Posterior cingulate gyrus (tissue), 11 donors: ENCODE measurements at regions of chr1 and their contacts with region 1.

Region 1: GRCh38 chr1:228165372-228166169 is at the start of gene IBA57:
- DNase-seq: peak; percentile 98 to 100 (median 100)

Region 2: GRCh38 chr1:227924833-227925574 is 240.6 kb before region 1 on chr1:
- intact Hi-C with region 1: no loop called
- DNase-seq: peak in 4 of 10 donors; percentile 21 to 74 (median 61)

Region 3: GRCh38 chr1:228043281-228043890 is 122.2 kb before region 1 on chr1:
- intact Hi-C with region 1: no loop called
- DNase-seq: peak in 2 of 10 donors; percentile 15 to 18

Region 4: DNA sequence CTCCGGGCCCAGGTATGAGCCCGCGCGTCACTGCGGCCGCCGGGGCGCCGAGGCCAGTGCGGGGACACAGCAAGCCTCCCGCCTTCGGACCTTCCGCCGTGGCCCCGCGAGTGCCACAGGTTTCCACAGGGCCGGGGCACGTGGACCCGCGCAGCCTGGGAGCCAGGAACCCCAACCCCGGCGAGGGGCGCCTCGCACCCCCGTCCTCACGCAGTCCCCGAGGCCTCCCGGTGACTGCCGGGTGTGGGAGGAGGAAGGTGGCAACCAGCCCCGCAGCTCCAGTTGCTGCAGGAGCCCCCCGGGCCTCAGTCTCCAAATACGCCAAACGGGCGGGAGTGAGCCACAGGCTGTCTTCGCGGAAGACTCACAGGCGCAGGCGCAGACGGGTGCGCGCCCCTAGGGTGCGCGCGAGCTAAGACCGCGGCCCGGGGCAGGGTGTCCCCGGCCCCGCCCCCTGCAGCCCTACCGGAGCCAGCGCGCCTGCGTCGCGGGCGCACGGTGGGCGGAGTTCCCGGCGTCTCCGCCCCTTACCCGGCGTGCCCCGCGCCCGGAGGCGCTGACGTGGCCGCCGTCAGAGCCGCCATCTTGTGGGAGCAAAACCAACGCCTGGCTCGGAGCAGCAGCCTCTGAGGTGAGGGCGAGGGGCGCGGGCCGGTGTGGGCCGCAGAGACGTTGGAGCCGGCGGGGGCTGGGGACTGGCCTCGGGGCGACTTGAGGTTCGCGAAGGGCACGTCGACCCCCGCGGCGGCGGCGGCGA is 83.3 kb before region 1 on chr1 and contains the start of gene ARF1:
- intact Hi-C with region 1: loop called (anchors 5 kb)
- DNase-seq: peak; percentile 80 to 98 (median 88)

Region 5: DNA sequence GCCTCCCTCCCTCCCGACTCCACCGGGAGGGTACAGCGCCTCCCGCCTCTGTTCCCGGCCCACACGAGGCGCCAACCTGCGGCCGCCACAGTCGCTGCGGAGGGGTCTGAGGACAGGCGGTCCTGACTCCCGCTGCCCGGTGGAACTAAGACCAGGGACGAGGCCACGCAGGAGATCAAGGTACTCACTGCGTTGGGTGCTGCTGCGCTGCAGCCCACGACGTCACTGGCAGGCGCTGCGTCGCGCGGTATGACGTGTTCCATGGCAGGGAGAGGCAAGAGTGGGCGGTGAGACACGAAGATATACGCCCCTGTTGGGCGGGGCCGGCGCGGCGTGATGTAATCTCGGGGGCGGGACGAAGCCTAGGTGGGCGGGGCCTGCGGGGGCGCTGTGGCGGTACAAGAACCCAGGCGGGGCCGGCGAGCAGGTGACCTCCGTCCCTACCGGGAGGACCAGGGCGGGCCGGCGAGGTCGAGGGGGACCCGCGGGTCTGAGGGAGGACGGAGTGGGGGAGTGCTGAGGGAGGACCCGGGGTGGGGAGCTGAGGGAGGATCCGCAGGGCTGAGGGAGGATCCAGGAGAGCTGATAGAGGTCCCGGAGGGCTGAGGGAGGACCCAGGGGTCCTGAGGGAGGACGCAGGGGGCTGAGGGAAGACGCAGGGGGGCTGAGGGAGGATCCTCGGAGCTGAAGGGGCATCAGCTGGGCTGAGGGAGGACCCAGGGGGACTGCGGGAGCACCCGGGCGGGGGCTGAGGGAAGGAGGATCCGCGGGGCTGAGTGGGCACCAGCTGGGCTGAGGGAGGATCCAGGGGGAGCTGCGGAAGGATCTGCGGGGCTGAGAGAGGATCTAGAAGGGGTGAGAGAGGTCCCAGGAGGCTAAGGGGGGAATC is 56.3 kb before region 1 on chr1 and contains the start of gene MRPL55:
- intact Hi-C with region 1: loop called (anchors 2 kb)
- DNase-seq: peak; percentile 99 to 100 (median 100)

Region 6: DNA sequence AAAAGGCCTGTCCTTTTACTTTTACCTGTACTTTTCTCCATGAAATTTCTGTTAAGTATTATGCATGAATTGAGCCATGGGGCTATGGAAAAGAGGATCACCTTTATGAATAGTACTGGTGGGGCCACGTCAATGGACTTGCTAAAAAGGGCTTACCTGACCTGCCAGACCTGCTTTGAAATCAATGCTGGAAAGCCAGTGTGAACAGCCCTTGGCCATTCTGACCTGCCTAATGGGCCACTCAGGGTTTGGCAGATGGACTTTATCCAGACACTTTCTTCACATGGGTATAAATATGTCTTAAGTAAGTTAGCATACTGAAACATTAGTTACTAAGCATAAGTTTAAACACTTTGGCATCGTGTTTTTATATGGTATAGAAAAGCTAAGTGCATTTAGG is 33.8 kb before region 1 on chr1:
- intact Hi-C with region 1: loop called (anchors 2 kb)
- DNase-seq: peak in 1 of 10 donors; percentile 29

Region 7: DNA sequence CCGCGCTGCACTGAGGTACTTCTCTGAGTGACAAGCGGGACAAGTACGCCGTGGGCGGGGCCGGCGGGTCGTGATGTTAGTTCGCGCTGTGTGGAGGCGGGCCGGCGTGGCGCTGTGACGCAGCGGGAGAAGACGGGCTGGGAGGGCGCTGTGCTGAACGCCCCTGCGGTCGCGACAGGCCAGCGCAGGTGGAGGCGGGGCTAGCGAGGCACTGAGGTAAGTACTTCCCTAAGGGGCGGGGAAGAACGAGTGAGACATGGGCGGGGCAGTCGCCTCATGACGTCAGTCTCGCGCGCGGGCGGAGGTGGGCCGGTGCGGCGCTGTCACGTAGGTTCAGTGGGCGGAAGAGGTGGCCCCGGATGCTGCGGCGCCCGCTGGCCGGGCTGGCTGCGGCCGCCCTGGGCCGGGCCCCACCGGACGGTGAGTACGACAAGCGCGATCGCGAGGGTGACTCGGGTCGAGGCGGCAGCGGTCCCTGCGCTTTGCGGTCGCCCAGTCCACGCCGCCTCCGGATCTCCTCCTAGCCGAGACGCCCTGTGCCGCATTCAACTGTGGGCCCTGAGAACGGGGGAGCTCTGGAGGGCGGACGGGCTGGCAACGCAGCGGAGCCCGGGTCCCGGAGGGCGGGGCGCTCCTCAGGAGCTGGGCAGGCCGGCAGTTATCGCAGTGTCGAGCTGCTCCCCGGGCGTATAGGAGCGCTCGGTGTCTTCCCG is 25.5 kb before region 1 on chr1 and contains the start of gene GUK1:
- intact Hi-C with region 1: loop called (anchors 1 kb)
- DNase-seq: peak; percentile 95 to 100 (median 100)

Region 8: DNA sequence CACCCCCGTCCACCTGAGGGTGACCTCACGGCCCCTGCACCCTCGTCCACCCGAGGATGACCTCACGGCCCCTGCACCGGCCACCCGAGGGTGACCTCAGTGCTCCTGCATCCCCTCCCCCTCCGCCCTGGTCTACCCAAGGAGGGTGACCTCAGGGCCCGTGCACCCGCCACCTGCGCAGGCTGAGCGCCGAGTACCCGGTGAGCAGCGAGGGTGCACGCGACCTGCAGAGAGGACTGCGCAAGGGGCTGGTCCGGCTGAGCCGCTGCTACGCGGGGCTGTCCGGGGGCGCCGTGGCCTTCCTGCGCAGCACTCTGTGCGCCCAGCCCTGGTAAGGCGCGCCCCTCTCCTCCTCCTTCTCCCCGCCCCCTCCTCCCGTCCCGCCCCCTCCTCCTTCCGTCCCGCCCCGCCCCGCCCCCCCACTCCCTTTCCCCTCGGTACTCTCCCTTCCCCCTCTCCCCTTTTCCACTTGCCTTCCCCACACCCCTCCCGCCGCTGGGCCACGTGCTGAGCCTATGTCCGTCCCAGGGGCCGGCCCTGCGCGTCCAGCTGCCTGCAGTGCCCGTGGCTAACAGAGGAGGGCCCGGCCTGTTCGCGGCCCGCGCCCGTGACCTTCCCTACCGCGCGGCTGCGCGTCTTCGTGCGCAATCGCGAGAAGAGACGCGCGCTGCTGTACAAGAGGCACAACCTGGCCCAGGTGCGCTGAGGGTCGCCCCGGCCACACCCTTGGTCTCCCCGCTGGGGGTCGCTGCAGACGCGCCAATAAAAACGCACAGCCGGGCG is 212.7 kb after region 1 on chr1:
- intact Hi-C with region 1: loop called (anchors 10 kb)
- DNase-seq: peak; percentile 44 to 94 (median 63)